Common myeloid progenitor, CD34-positive (primary cell): ENCODE measurements at regions of chr13 and their contacts with region 1.

Region 1: GRCh38 chr13:106507560-106508274 is 27.7 kb downstream of the EFNB2 start:
- DNase-seq: peak; percentile 86 to 96 (median 96)
- H3K4me3 ChIP-seq: peak overlapping the region in 4 of 7 experiments; percentile 40 to 62 (median 56)
- H3K27ac ChIP-seq: peak overlapping the region in 1 of 2 experiments; percentile 38
- H3K4me1 ChIP-seq: peaks cover 2 to 10% (median 7%) of the 10 kb centered on the region in 4 experiments
- H3K27me3 ChIP-seq: no peaks in the 10 kb centered on the region

Region 2: DNA sequence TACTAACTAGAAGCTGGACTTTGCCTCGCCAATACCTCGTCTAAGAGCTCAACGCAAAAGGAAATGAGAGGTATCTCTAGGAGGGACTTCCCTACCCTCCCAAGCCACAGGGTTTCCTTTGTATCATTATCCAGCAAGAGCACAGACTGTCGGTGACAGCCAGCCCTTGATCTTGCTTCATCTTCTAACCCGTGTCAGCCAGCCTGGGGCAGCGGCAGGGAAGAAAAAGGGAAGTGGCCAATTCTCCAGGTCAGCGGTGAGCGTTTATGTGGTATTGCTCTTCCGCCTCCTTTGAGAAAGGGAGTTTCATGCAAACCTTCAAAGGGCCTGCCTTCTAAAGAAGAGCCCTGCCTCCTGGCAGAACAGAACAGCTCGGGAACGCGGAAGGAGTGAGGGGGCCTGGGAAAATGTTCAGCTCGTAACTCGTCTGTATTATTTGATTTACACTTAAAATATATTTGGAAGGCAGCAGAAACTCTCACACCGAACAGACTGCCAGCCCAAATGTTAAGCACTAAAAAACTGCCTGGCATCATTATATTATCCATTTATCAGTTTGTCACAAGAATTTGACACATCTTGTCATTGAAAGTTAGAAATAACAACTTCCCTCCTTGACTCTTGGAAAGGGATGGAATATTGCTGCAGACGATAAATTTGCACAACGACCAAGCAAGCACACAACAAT is 14.0 kb before region 1 on chr13:
- CTCF ChIA-PET with region 1: interaction called, 11 read pairs
- POLR2A ChIA-PET with region 1: interaction called, 6 read pairs
- DNase-seq: peak; percentile 93 to 97 (median 97)
- H3K4me3 ChIP-seq: peak overlapping the region in 2 of 7 experiments; percentile 19 to 48
- H3K27ac ChIP-seq: no peak overlapping the region
- H3K4me1 ChIP-seq: peaks cover 20 to 85% (median 64%) of the 10 kb centered on the region in 4 experiments
- H3K27me3 ChIP-seq: peaks cover 0 to 2% (median 0%) of the 10 kb centered on the region in 5 experiments

Region 3: DNA sequence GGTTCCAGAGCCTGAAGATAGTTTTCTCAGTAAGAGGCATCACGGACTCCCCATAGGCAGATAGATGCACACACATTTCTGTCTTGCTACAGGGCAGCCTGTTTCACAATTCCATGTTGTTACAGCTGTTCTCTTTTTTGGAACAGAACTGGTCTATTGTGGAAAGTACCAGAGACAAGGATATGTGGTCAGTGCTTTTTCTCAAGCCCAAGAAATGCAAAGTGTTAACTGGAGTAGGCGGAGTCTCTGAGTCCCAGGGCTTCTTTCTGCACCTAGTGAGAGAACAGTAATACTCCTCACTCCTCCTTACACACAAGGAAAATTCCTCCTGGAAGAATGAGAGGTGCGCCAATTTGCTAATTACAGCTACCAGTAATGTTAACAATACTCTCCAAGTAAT is 201.8 kb after region 1 on chr13:
- CTCF ChIA-PET with region 1: no interaction called
- POLR2A ChIA-PET with region 1: no interaction called
- DNase-seq: no peak
- H3K4me3 ChIP-seq: no peak overlapping the region
- H3K27ac ChIP-seq: no peak overlapping the region
- H3K4me1 ChIP-seq: no peaks in the 10 kb centered on the region
- H3K27me3 ChIP-seq: no peaks in the 10 kb centered on the region